Prostate gland (tissue), 2 donors: ENCODE measurements at regions of chr11 and their contacts with region 1.

Region 1: GRCh38 chr11:33996498-33997454 is 54.8 kb upstream of the CAPRIN1 start:
- DNase-seq: peak; percentile 73
- H3K4me3 ChIP-seq: no peak overlapping the region
- H3K27ac ChIP-seq: no peak overlapping the region
- H3K4me1 ChIP-seq: no peaks in the 10 kb centered on the region
- H3K27me3 ChIP-seq: no peaks in the 10 kb centered on the region
- CTCF ChIP-seq: peak; percentile 54 to 90 (median 86)
- POLR2A ChIP-seq: no peak

Region 2: DNA sequence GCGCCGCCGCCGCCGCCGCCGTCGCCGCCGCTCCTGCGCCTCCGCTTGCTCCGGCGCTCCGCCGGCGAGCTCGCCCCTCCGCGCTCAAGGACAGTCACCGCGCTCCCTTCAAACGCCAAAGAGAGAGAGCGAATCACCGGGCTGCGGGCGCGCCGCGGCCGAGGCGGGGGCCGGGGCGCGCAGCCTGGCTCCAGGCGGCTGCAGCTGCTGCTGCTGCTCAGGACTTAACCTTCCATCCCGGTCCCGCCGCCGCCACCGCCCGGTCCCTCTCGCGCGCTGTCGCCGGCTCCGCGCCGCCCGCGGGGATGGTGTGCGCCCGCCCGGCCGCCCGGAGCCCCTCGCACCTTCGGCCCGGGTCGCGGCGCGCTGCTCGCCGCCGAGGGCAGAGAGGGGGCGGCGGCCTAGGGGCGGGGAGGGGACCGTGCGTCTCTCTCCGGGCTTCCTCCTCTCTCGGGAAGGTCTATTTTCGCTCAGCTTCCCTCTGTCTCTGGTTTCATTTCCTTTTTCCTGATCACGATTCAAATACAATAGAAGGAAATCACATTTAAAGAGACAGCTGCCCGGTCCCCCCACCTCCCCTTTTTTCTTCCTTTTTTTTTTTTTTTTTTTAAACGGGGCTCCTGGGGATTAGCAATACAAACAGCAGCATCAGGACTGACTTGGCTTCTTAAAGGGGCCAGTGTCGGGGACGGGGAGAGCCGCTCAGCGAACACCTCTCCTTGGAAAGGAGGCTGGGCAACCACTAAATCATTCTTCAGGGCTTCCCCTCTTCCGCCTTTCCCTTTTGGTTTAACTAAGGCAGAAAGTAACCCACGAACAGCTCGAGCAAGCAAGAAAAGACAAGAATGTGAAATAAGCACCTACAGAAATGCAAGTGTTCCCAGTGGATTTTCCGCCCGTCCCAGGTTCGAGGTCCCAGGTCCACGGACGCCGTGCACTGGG is 127.0 kb before region 1 on chr11:
- intact Hi-C with region 1: no loop called
- DNase-seq: no peak
- H3K4me3 ChIP-seq: peak overlapping the region; percentile 51
- H3K27ac ChIP-seq: peak overlapping the region; percentile 39 to 56
- H3K4me1 ChIP-seq: no peaks in the 10 kb centered on the region
- H3K27me3 ChIP-seq: no peaks in the 10 kb centered on the region
- CTCF ChIP-seq: no peak
- POLR2A ChIP-seq: no peak

Region 3: GRCh38 chr11:34174412-34175041 is 177.8 kb after region 1 on chr11:
- intact Hi-C with region 1: loop called (anchors 10 kb)
- DNase-seq: peak; percentile 83
- H3K4me3 ChIP-seq: peak overlapping the region; percentile 6 to 9
- H3K27ac ChIP-seq: peak overlapping the region in 1 of 2 donors; percentile 9
- H3K4me1 ChIP-seq: peaks cover 3% of the 10 kb centered on the region
- H3K27me3 ChIP-seq: no peaks in the 10 kb centered on the region
- CTCF ChIP-seq: peak; percentile 89 to 98 (median 94)
- POLR2A ChIP-seq: no peak

Region 4: GRCh38 chr11:34492806-34493414 is 496.1 kb after region 1 on chr11:
- intact Hi-C with region 1: loop called (anchors 10 kb)
- DNase-seq: peak; percentile 44
- H3K4me3 ChIP-seq: no peak overlapping the region
- H3K27ac ChIP-seq: no peak overlapping the region
- H3K4me1 ChIP-seq: no peaks in the 10 kb centered on the region
- H3K27me3 ChIP-seq: no peaks in the 10 kb centered on the region
- CTCF ChIP-seq: peak; percentile 64 to 74 (median 70)
- POLR2A ChIP-seq: no peak